Sigmoid colon (tissue), 7 donors: ENCODE measurements at regions of chr9 and their contacts with region 1.

Region 1: DNA sequence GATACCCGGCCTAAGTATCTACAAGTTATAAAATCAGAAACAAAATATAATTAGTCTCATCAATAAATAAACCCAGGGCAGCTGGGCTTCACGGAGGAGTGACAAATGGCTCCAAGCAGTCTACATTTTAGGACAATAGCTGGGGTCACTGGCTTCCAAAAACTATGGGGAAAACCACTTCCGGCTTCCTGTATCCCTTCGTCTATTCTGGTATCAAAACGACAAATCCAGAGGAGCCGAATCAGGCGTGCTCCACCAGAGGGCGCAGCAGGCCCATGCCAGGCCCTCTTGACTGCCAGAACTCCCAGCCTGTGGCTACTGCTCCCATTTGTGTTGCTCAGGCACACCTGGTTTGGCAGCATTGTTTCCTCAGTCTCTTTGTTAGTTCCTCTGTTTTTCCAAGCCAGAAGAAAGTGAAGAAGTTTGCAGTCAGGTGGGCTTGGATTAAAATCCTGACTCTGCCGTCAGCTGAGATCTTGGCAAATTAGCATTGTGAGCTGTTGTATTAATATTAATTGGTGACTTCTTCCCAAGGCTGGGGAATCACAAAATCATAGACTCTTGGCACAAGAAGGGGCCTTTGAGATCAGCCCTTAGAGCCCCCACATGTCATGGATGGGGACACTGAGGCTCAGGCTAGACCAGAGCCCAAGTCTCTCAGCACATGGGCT is 11.6 kb upstream of the RAB14 start:
- DNase-seq: peak; percentile 96
- H3K4me3 ChIP-seq: no peak overlapping the region
- H3K27ac ChIP-seq: peak overlapping the region; percentile 35 to 64 (median 62)
- H3K4me1 ChIP-seq: peaks cover 0 to 7% (median 5%) of the 10 kb centered on the region in 4 donors
- H3K27me3 ChIP-seq: no peaks in the 10 kb centered on the region
- CTCF ChIP-seq: peak; percentile 92 to 97 (median 96)
- EP300 ChIP-seq: no peak
- POLR2A ChIP-seq: no peak

Region 2: DNA sequence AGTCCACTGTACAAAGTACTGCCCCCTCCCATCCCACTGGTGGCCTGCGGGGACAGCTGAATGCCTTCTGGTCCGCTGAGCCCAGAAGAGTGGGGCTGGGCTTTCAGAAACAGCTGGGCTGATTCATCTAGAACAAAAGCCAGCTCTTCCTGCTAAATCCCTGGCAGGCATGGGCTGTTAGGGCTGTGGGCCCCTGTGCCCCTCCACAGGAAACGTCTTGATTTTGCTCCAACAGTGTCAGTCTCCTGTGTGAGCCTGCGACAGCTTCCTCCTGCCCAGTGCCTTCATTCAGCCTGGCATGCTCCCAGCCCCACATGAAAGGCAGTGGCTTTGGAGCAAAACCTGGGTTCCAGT is 47.8 kb after region 1 on chr9:
- intact Hi-C with region 1: loop called (anchors 2 kb)
- DNase-seq: peak; percentile 72
- H3K4me3 ChIP-seq: no peak overlapping the region
- H3K27ac ChIP-seq: peak overlapping the region in 3 of 4 donors; percentile 95 to 99 (median 99)
- H3K4me1 ChIP-seq: peaks cover 0 to 59% (median 33%) of the 10 kb centered on the region in 4 donors
- H3K27me3 ChIP-seq: no peaks in the 10 kb centered on the region
- CTCF ChIP-seq: no peak
- EP300 ChIP-seq: no peak
- POLR2A ChIP-seq: no peak

Region 3: GRCh38 chr9:121299467-121300234 is 86.4 kb after region 1 on chr9:
- intact Hi-C with region 1: loop called (anchors 5 kb)
- DNase-seq: peak; percentile 93
- H3K4me3 ChIP-seq: peak overlapping the region; percentile 41 to 67 (median 62)
- H3K27ac ChIP-seq: peak overlapping the region; percentile 94 to 99 (median 97)
- H3K4me1 ChIP-seq: peaks cover 0 to 96% (median 94%) of the 10 kb centered on the region in 4 donors
- H3K27me3 ChIP-seq: no peaks in the 10 kb centered on the region
- CTCF ChIP-seq: no peak
- EP300 ChIP-seq: no peak
- POLR2A ChIP-seq: peak in 1 of 2 donors; percentile 37

Region 4: GRCh38 chr9:121317742-121318489 is 104.6 kb after region 1 on chr9:
- intact Hi-C with region 1: loop called (anchors 2 kb)
- DNase-seq: no peak
- H3K4me3 ChIP-seq: no peak overlapping the region
- H3K27ac ChIP-seq: peak overlapping the region; percentile 91 to 99 (median 94)
- H3K4me1 ChIP-seq: peaks cover 0 to 78% (median 64%) of the 10 kb centered on the region in 4 donors
- H3K27me3 ChIP-seq: no peaks in the 10 kb centered on the region
- CTCF ChIP-seq: no peak
- EP300 ChIP-seq: no peak
- POLR2A ChIP-seq: no peak

Region 5: DNA sequence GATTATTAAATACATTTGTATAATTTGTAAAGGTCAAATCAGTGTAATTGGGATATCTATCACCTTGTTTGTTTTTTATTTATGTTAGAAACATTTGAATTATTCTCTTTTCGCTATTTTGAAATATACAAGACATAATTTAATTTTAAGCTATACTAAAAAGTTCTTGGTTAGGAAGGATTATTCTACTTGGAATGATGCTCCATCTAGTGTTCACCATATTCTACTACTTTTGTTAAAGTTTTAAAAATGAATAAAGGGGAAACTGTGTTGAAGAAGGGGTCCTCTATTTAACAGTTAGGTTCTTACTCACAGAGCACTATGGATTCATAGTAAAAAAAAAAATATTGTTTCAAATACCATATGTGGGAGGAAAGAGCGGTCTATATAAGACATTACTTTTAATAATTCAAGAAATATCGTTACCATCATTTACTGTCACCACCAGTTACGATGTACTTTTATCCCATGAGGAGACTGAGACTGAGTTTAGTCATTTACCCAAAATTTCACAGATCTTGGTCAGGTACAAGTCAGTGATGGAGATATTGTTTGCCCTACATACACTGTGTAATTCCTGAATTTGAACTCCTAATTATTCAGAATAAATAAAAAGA is 163.1 kb after region 1 on chr9:
- intact Hi-C with region 1: loop called (anchors 2 kb)
- DNase-seq: no peak
- H3K4me3 ChIP-seq: no peak overlapping the region
- H3K27ac ChIP-seq: peak overlapping the region in 2 of 4 donors; percentile 96 to 99
- H3K4me1 ChIP-seq: peaks cover 0 to 49% (median 31%) of the 10 kb centered on the region in 4 donors
- H3K27me3 ChIP-seq: no peaks in the 10 kb centered on the region
- CTCF ChIP-seq: peak in 3 of 4 experiments; percentile 31 to 56 (median 40)
- EP300 ChIP-seq: no peak
- POLR2A ChIP-seq: no peak

Region 6: GRCh38 chr9:121399883-121400607 is 186.8 kb after region 1 on chr9:
- intact Hi-C with region 1: loop called (anchors 1 kb)
- DNase-seq: no peak
- H3K4me3 ChIP-seq: no peak overlapping the region
- H3K27ac ChIP-seq: no peak overlapping the region
- H3K4me1 ChIP-seq: peaks cover 0 to 4% (median 0%) of the 10 kb centered on the region in 4 donors
- H3K27me3 ChIP-seq: no peaks in the 10 kb centered on the region
- CTCF ChIP-seq: peak; percentile 62 to 78 (median 70)
- EP300 ChIP-seq: no peak
- POLR2A ChIP-seq: no peak